Right cardiac atrium (tissue), 5 donors: ENCODE measurements at regions of chr13 and their contacts with region 1.

Region 1: GRCh38 chr13:113562085-113562749 is 22.3 kb upstream of the TFDP1 start:
- DNase-seq: peak; percentile 64 to 82 (median 82)
- ATAC-seq: peak; percentile 60 to 68
- H3K4me3 ChIP-seq: no peak overlapping the region
- H3K27ac ChIP-seq: no peak overlapping the region
- H3K4me1 ChIP-seq: no peaks in the 10 kb centered on the region
- H3K27me3 ChIP-seq: no peaks in the 10 kb centered on the region

Region 2: DNA sequence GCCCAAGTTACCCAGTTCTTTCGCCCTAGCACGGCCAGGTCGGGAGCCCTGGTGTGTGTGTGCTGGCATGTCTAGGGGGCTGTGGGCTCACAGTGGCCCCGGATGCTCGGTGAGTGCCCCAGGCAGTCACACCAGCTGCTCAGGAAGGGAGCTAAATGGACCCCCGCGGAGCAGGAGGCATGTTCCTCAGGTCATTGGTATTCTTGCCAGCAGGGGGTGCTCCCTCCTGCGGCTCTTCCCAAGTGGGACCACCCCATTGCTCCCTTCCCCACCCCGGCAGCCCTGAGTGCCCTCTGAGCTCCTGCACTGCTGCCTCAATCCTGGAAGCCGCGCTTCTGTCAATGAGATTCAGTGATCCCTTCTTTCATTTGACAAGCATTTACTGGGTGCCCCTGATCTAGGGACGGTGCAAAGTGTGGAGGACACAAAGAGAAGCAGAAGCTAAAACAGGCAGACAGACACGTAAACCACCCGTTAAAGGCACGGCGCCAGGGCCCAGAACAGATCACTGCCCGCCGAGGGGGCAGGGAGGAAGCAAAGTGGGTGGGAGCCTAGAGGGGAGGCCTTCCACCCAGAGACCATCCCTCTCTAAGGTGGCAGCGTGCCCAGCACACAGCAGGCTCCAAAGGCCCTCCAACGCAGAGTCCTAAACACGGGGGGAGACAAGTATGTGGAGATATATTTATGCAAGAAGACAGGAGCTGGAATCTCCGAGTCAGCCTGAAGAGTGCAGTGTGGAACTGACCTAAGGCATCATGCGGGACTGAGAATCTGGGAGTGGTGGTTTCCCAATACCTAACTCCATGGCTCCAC is 103.8 kb before region 1 on chr13:
- intact Hi-C with region 1: loop called in 2 of 4 experiments (anchors 5 to 10 kb)
- DNase-seq: peak in 2 of 3 donors; percentile 67 to 74
- ATAC-seq: peak; percentile 29 to 42
- H3K4me3 ChIP-seq: no peak overlapping the region
- H3K27ac ChIP-seq: peak overlapping the region; percentile 63
- H3K4me1 ChIP-seq: no peaks in the 10 kb centered on the region
- H3K27me3 ChIP-seq: no peaks in the 10 kb centered on the region

Region 3: GRCh38 chr13:113474179-113474578 is 88.0 kb before region 1 on chr13:
- intact Hi-C with region 1: no loop called
- DNase-seq: peak; percentile 42 to 76 (median 68)
- ATAC-seq: peak; percentile 53 to 76
- H3K4me3 ChIP-seq: no peak overlapping the region
- H3K27ac ChIP-seq: no peak overlapping the region
- H3K4me1 ChIP-seq: no peaks in the 10 kb centered on the region
- H3K27me3 ChIP-seq: no peaks in the 10 kb centered on the region

Region 4: GRCh38 chr13:113639616-113640262 is 77.5 kb after region 1 on chr13:
- intact Hi-C with region 1: no loop called
- DNase-seq: no peak
- ATAC-seq: no peak
- H3K4me3 ChIP-seq: no peak overlapping the region
- H3K27ac ChIP-seq: no peak overlapping the region
- H3K4me1 ChIP-seq: no peaks in the 10 kb centered on the region
- H3K27me3 ChIP-seq: no peaks in the 10 kb centered on the region

Region 5: DNA sequence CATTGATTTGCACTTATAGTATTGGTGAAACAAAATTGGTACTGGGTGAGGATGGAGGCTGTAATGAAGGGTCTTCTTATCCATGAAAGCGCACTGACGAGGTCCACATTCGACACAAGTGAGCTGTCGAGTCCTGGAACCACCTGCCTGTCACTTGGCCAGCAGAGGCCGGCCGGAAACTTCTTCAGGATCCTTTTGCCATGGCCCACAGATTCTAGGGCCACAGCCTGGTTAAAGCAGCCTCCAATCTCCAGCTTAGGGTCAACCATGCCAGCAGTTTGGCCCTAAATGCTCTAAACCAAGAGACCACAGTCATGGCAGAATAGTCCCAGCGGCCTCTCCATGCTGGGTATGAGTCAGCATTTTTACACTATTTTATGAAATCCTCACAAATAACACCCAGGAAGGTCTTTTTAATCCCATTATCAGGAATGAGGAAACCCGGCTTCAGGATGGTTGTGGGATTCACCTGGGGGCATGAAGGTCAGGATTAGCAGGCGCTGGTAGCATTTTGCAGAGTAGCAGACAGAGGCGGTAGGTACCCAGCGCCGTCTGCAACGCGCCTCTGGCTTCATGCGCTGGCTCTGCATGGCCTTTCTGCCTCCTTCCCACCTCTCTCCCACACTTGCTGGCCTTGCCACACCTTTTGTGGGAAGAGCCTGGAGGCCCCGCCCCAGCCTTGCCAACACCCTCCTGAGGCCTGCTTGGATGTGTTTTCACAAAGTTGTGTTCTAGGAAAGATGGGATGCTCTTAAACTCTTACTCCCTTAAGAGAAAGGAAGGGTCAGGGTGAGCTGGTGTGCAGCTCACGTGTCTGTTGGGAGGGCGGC is 286.4 kb after region 1 on chr13:
- intact Hi-C with region 1: no loop called
- DNase-seq: peak in 2 of 3 donors; percentile 30 to 41
- ATAC-seq: no peak
- H3K4me3 ChIP-seq: no peak overlapping the region
- H3K27ac ChIP-seq: no peak overlapping the region
- H3K4me1 ChIP-seq: peaks cover 20% of the 10 kb centered on the region
- H3K27me3 ChIP-seq: no peaks in the 10 kb centered on the region